ENCODE measurements at regions of chr1 and their contacts with region 1.

Region 1: GRCh38 chr1:224922404-224923164 is 6.9 kb upstream of the DNAH14 start:
- DNase-seq: peak; percentile 80
- ATAC-seq: peak; percentile 95
- H3K4me3 ChIP-seq: no peak overlapping the region
- H3K27ac ChIP-seq: no peak overlapping the region
- H3K4me1 ChIP-seq: no peaks in the 10 kb centered on the region
- H3K27me3 ChIP-seq: no peaks in the 10 kb centered on the region
- CTCF ChIP-seq: peak; percentile 92

Region 2: GRCh38 chr1:224427346-224427745 is 495.2 kb before region 1 on chr1:
- CTCF ChIA-PET with region 1: no interaction called
- POLR2A ChIA-PET with region 1: no interaction called
- intact Hi-C with region 1: loop called (anchors 10 kb)
- DNase-seq: peak; percentile 87
- ATAC-seq: peak; percentile 89
- H3K4me3 ChIP-seq: peak overlapping the region; percentile 13; the same call in 1 of the 2 replicates
- H3K27ac ChIP-seq: peak overlapping the region; percentile 70
- H3K4me1 ChIP-seq: peaks cover 47% of the 10 kb centered on the region
- H3K27me3 ChIP-seq: no peaks in the 10 kb centered on the region
- CTCF ChIP-seq: no peak

Region 3: DNA sequence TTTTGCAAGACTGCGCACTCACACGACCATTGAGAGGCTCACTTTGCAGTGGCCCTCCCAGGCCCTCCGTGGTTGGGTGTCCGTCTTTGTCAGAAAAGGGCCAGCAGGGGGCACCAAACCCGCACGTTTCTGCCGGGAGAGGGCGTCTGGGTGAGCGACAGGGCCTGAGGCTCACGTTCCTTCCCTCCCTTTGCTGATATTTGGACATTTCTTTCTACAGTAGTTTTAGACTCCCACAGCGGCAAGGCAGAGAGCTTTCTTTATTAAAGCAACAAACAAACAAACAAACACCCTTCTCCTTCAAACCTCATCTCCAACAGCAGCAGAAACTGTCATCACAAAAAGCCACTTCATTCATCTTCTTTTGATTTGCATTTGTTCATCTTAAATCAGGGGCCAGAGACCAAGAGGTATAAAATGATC is 408.8 kb before region 1 on chr1:
- CTCF ChIA-PET with region 1: interaction called, 11 read pairs
- POLR2A ChIA-PET with region 1: interaction called, 3 read pairs
- intact Hi-C with region 1: loop called (anchors 1 kb)
- DNase-seq: peak; percentile 97
- ATAC-seq: peak; percentile 95
- H3K4me3 ChIP-seq: no peak overlapping the region
- H3K27ac ChIP-seq: no peak overlapping the region
- H3K4me1 ChIP-seq: peaks cover 25% of the 10 kb centered on the region
- H3K27me3 ChIP-seq: no peaks in the 10 kb centered on the region
- CTCF ChIP-seq: peak; percentile 98

Region 4: GRCh38 chr1:224736619-224737352 is 185.8 kb before region 1 on chr1:
- CTCF ChIA-PET with region 1: no interaction called
- POLR2A ChIA-PET with region 1: no interaction called
- intact Hi-C with region 1: loop called (anchors 10 kb)
- DNase-seq: no peak
- ATAC-seq: no peak
- H3K4me3 ChIP-seq: no peak overlapping the region
- H3K27ac ChIP-seq: no peak overlapping the region
- H3K4me1 ChIP-seq: peaks cover 24% of the 10 kb centered on the region
- H3K27me3 ChIP-seq: no peaks in the 10 kb centered on the region
- CTCF ChIP-seq: no peak

Region 5: GRCh38 chr1:224873434-224874369 is 48.9 kb before region 1 on chr1:
- CTCF ChIA-PET with region 1: interaction called, 11 read pairs
- POLR2A ChIA-PET with region 1: no interaction called
- intact Hi-C with region 1: no loop called
- DNase-seq: peak; percentile 61
- ATAC-seq: peak; percentile 76
- H3K4me3 ChIP-seq: no peak overlapping the region
- H3K27ac ChIP-seq: no peak overlapping the region
- H3K4me1 ChIP-seq: peaks cover 11% of the 10 kb centered on the region
- H3K27me3 ChIP-seq: peaks cover 11% of the 10 kb centered on the region; the same call in 1 of the 2 replicates
- CTCF ChIP-seq: no peak

Region 6: GRCh38 chr1:225304996-225305395 is 382.4 kb after region 1 on chr1:
- CTCF ChIA-PET with region 1: no interaction called
- POLR2A ChIA-PET with region 1: no interaction called
- intact Hi-C with region 1: no loop called
- DNase-seq: no peak
- ATAC-seq: no peak
- H3K4me3 ChIP-seq: no peak overlapping the region
- H3K27ac ChIP-seq: no peak overlapping the region
- H3K4me1 ChIP-seq: no peaks in the 10 kb centered on the region
- H3K27me3 ChIP-seq: no peaks in the 10 kb centered on the region
- CTCF ChIP-seq: no peak